ENCODE measurements at regions of chr2 and their contacts with region 1.

Region 1: DNA sequence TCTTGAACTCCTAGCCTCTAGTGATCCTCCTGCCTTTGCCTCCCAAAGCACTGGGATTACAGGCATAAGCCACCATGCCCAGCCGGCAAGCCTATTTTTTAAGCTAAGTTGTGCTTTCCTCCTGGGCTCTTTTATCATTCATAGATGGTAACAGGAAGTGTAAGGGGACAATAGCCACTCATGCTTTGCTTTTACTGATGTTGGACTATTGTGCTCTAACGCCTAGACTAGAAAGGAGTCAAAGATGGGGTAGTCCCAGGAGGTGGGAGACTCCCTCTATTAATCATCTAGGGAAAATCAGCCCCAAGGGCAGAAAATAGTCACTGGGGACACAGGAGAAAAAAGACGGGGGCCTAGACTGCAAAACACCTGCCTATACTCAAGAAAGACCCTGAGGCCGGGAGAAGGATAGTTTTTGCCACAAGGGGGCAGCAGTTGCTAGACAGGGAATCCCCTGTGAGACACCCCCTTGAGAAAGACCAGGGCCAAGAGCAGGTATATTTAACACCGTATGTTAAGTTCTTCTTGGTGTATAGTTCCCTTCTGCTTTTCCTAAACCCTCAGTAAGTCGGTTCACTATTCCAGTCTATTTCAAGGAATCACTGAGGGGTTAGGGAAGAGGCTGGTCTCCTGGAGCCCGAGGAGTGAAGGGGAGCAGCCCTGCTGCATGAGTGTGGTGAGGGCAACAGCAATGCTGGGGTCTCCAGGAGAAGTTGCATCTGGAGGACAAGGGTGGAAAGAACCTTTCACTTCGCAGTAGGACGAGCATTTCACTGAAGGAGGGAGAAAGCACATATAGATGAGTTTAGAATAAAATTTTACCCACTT is 2.1 kb upstream of the CXCR1 start:
- DNase-seq: peak; percentile 62 to 69 (median 66)
- ATAC-seq: peak; percentile 95
- H3K4me3 ChIP-seq: no peak overlapping the region
- H3K27ac ChIP-seq: no peak overlapping the region
- H3K4me1 ChIP-seq: no peaks in the 10 kb centered on the region; a peak in 2 of 5 replicates
- H3K27me3 ChIP-seq: peaks cover 11 to 17% of the 10 kb centered on the region in 2 experiments; a peak in 4 of 5 replicates
- CTCF ChIP-seq: peak; percentile 69 to 79 (median 70)
- EP300 ChIP-seq: no peak
- POLR2A ChIP-seq: no peak
- RAD21 ChIP-seq: peak; percentile 23 to 58

Region 2: GRCh38 chr2:217785544-217786045 is 383.3 kb before region 1 on chr2:
- CTCF ChIA-PET with region 1: no interaction called
- POLR2A ChIA-PET with region 1: no interaction called
- in situ Hi-C with region 1: no loop called
- intact Hi-C with region 1: no loop called
- DNase-seq: peak; percentile 63 to 73 (median 70)
- ATAC-seq: peak; percentile 88
- H3K4me3 ChIP-seq: no peak overlapping the region
- H3K27ac ChIP-seq: no peak overlapping the region
- H3K4me1 ChIP-seq: peaks cover 0 to 5% of the 10 kb centered on the region in 2 experiments; a peak in 3 of 5 replicates
- H3K27me3 ChIP-seq: no peaks in the 10 kb centered on the region
- CTCF ChIP-seq: peak; percentile 82 to 91 (median 90)
- EP300 ChIP-seq: no peak
- POLR2A ChIP-seq: no peak
- RAD21 ChIP-seq: peak; percentile 66 to 81

Region 3: GRCh38 chr2:218257390-218257981 is 88.6 kb after region 1 on chr2:
- CTCF ChIA-PET with region 1: interaction called, 3 read pairs
- POLR2A ChIA-PET with region 1: no interaction called
- in situ Hi-C with region 1: loop called (anchors 5 kb)
- intact Hi-C with region 1: loop called (anchors 5 kb)
- DNase-seq: peak; percentile 62 to 71 (median 66)
- ATAC-seq: peak; percentile 88
- H3K4me3 ChIP-seq: no peak overlapping the region
- H3K27ac ChIP-seq: peak overlapping the region; percentile 12; the same call in 2 of the 3 replicates
- H3K4me1 ChIP-seq: peaks cover 1 to 3% of the 10 kb centered on the region in 2 experiments; a peak in 4 of 5 replicates
- H3K27me3 ChIP-seq: no peaks in the 10 kb centered on the region
- CTCF ChIP-seq: peak; percentile 73 to 79 (median 75)
- EP300 ChIP-seq: no peak
- POLR2A ChIP-seq: no peak
- RAD21 ChIP-seq: peak in 1 of 2 experiments; percentile 56; a peak in 3 of 4 replicates